Dorsolateral prefrontal cortex (tissue), 120 donors: ENCODE measurements at regions of chr19 and their contacts with region 1.

Region 1: DNA sequence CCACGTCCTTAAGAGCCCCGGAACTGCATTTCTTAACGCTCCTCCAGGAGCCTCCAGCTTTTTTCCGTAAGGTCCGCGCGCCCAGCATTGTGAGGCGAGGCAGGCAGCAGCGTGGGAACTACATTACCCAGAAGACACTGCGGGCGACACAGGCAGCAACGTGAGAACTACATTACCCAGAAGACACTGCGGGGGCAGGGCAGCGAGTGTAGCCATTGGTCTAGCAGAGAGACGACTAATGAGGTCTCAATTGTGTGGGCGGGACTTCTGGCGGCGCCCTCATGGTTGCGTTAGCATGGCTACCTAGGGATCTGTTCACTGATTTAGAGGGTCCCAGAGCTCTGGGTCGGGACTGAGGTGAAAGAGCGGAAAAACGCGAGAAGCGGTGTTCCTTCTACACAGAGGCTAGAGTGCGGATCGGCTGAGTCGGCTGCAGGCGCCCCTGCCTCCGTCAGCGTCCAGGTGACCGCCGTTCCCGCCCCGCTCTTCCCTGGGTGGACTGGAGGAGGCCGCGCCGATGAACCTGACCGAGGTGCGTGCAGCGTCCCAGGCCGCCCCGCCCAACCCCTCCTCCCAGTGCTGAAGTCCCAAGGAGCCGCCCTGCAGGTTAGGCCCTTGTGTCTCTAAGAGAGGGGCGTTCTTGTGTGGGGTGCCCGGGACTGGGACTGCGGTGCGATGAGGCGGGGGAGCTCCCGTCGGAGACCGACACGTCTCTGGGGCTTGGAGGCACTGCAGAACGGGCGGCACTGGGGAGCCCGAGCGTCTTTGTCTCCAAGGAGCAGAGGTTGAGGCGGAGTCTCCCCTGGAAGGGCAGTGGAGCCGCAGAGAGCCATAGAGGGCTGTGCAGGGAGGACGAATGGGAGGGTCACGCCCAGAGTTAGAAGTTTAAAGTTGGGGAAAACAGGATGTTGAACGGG is at the start of gene ZNF749:
- DNase-seq: peak; percentile 98 to 100 (median 99)
- H3K4me3 ChIP-seq: peak within 1 kb of the TSS; percentile 51 to 99 (median 91)
- H3K27ac ChIP-seq: peak within 1 kb of the TSS in 30 of 59 donors; percentile 6 to 81 (median 56)
- H3K27me3 ChIP-seq: no peaks in the 10 kb centered on the region
- CTCF ChIP-seq: peak in 27 of 56 donors; percentile 6 to 46 (median 24)
- total RNA-seq, gene ZNF749: 7.2 to 23.0 (median 14.2) TPM

Region 2: DNA sequence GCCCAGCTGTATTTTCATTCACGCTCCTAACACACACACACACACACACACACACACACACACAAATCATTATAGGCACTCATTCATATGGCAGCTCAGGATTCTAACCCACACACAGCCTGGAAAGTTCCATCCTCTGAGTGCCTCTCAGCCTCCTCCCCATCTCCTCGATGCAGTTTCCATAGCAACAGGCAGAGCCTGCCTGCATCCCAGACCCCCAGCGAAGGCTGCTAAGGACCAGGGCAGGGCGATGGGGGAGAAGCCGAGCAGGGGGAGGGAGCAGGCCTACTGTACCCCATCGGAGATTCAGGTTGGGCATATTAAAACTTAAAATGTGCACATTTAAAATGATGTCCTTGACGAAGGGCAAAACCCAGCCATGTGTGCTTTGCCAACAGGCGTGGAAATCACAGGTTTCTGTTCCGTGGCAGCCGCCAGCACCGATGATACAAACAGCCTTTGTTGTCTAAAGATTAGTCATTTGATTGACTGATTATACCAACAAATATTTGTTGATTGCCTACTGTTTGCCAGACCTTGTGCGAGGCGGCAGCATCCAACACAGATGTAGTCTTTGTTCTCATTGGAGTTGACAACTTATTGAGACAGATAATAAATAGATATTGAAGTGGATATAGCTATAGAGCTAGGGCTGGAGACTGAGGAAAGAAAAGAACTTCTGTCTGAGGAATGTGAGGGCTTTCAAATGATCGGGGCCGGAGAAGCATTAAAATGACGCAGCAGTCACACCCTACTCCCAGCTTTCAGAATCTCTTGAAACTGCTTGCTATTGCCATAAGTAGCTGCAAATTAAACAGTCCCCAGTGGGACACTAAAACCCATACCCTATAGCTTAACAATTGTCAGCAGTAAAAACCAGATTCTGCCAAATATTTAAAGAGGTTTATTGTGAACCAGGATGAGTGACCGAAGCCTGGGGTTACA is 359.2 kb before region 1 on chr19:
- intact Hi-C with region 1: no loop called
- DNase-seq: peak in 8 of 10 donors; percentile 21 to 64 (median 51)
- H3K4me3 ChIP-seq: peak overlapping the region in 5 of 59 donors; percentile 1 to 36 (median 13)
- H3K27ac ChIP-seq: peak overlapping the region in 48 of 59 donors; percentile 5 to 85 (median 57)
- H3K27me3 ChIP-seq: peaks cover 0 to 13% (median 0%) of the 10 kb centered on the region in 45 donors
- CTCF ChIP-seq: no peak

Region 3: GRCh38 chr19:57410877-57411671 is 24.2 kb before region 1 on chr19 and contains the start of gene ZNF17:
- intact Hi-C with region 1: loop called in 1 of 2 experiments (anchors 2 kb)
- DNase-seq: peak; percentile 92 to 97 (median 96)
- H3K4me3 ChIP-seq: peak within 1 kb of the TSS; percentile 58 to 100 (median 95)
- H3K27ac ChIP-seq: peak within 1 kb of the TSS in 43 of 59 donors; percentile 24 to 87 (median 62)
- H3K27me3 ChIP-seq: no peaks in the 10 kb centered on the region
- CTCF ChIP-seq: peak in 26 of 56 donors; percentile 4 to 52 (median 28)
- total RNA-seq, gene ZNF17: 17.8 to 56.1 (median 33.0) TPM

Region 4: DNA sequence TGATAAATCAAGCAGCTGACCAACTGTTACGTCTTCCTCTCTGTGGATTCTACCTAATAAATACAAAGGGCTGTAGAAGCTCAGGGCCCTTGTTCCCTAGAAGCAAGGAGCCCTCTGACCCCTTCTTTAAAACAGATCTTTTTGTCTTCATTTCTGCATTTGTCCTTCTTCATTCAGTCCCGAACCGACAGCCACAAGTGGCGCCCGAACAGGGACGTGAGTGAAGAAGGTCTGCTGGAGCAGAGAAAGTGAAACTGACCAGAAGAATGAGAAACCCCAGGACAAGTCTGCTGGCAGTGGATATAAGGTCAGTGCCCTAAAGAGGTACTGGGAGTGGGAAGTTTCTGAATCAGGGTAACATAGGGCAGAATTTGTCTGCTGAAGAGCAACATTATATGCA is 77.5 kb after region 1 on chr19:
- intact Hi-C with region 1: no loop called
- DNase-seq: no peak
- H3K4me3 ChIP-seq: no peak overlapping the region
- H3K27ac ChIP-seq: no peak overlapping the region
- H3K27me3 ChIP-seq: no peaks in the 10 kb centered on the region
- CTCF ChIP-seq: no peak

Region 5: DNA sequence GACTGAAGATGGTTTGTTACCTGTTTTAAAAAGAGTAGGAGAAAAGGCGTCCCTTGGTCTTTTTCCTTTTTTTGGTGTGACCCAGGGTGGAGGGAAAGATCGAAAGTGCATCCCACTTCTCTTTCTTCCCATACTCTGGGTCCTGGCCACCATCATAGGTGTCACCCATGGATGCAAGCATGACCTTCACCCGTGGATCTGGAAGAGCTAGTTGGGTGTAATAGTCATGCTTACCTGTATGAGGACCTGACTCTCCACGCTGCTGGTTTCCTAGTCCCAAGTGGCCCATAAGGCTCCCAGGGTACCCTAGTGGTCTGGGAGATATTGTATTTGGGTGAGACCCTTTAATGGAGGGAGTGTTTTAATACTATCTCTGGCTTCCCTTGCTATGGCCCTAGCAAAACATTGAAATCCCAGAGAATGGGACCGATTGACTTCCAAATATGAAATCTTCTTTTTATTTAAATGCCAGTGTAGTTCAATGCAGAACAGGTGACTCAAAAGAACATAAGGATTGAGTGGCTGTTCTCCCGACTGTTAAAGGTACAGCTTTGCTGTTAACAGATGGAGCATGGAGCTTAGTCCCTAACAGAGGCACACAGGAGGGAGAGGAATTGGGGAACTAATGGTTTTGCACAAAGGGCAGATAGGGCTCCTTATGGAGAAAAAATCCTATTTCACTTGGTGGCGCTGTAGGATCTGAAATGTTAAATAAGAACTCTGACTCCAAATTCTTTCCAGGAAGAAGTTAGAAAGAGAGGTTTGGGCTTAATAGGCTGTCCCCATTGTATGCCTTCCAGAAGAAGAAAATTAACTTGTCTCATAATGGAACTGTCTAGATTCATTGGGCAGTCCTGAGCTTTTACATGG is 131.3 kb after region 1 on chr19:
- intact Hi-C with region 1: no loop called
- DNase-seq: no peak
- H3K4me3 ChIP-seq: no peak overlapping the region
- H3K27ac ChIP-seq: no peak overlapping the region
- H3K27me3 ChIP-seq: no peaks in the 10 kb centered on the region
- CTCF ChIP-seq: no peak

Region 6: GRCh38 chr19:57664269-57665127 is 229.2 kb after region 1 on chr19:
- intact Hi-C with region 1: no loop called
- DNase-seq: peak; percentile 21 to 73 (median 50)
- H3K4me3 ChIP-seq: peak overlapping the region; percentile 43 to 78 (median 66)
- H3K27ac ChIP-seq: peak overlapping the region in 53 of 59 donors; percentile 1 to 87 (median 70)
- H3K27me3 ChIP-seq: peaks cover 0 to 14% (median 0%) of the 10 kb centered on the region in 45 donors
- CTCF ChIP-seq: no peak